CD8-positive, alpha-beta T cell (primary cell): ENCODE measurements at regions of chr6 and their contacts with region 1.

Region 1: GRCh38 chr6:31680840-31681671 is at the start of gene LY6G5C:
- DNase-seq: peak; percentile 29 to 80 (median 60)
- ATAC-seq: peak; percentile 75
- H3K4me3 ChIP-seq: peak within 1 kb of the TSS; percentile 71 to 73
- H3K4me3 Mint-ChIP-seq: peak within 1 kb of the TSS; percentile 89
- H3K27ac ChIP-seq: peak within 1 kb of the TSS in 1 of 2 experiments; percentile 60
- H3K27ac Mint-ChIP-seq: peak within 1 kb of the TSS; percentile 72
- H3K4me1 ChIP-seq: peaks cover 12% of the 10 kb centered on the region
- H3K4me1 Mint-ChIP-seq: peaks cover 16% of the 10 kb centered on the region
- H3K27me3 ChIP-seq: no peaks in the 10 kb centered on the region
- H3K27me3 Mint-ChIP-seq: no peaks in the 10 kb centered on the region
- CTCF ChIP-seq: no peak
- total RNA-seq, gene LY6G5C: 1.5 to 1.9 TPM

Region 2: GRCh38 chr6:31693535-31693934 is 12.5 kb after region 1 on chr6:
- CTCF ChIA-PET with region 1: interaction called, 11 read pairs
- POLR2A ChIA-PET with region 1: no interaction called
- intact Hi-C with region 1: no loop called
- DNase-seq: no peak
- ATAC-seq: no peak
- H3K4me3 ChIP-seq: no peak overlapping the region
- H3K4me3 Mint-ChIP-seq: no peak overlapping the region
- H3K27ac ChIP-seq: no peak overlapping the region
- H3K27ac Mint-ChIP-seq: no peak overlapping the region
- H3K4me1 ChIP-seq: no peaks in the 10 kb centered on the region
- H3K4me1 Mint-ChIP-seq: peaks cover 10% of the 10 kb centered on the region
- H3K27me3 ChIP-seq: no peaks in the 10 kb centered on the region
- H3K27me3 Mint-ChIP-seq: no peaks in the 10 kb centered on the region
- CTCF ChIP-seq: no peak

Region 3: DNA sequence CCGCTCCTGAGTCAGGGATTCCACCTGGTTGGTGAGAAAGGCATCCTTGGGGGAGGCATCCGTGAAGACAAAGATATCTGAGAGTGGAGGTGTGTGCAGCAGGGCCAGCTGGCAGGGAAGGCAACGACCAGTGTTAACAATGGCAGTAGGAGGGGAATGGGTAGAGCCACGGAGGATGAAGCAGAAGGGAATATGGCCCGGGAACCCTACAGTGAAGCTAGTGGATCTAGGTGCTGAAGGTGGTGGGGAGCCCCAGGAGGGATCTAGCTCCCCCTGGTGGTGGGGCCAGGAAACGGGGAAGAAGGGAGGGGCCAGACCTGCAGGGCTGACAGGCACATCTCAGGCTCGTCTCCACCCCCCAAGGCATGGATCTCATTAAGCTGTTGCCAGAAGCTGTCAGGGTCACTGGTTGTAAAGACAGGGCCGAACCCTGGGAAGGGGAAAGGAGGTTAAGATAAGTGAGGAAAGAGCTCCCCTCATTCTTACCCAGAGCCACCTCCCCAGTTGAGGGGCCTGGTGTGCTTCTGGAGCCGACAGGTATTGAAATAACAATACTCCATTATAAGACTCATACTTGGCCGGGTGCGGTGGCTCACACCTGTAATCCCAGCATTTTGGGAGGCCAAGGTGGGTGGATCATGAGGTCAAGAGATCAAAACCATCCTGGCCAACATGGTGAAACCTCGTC is 88.8 kb after region 1 on chr6:
- CTCF ChIA-PET with region 1: interaction called, 5 read pairs
- POLR2A ChIA-PET with region 1: no interaction called
- intact Hi-C with region 1: loop called in 1 of 2 experiments (anchors 1 kb)
- DNase-seq: peak; percentile 63 to 86 (median 80)
- ATAC-seq: peak; percentile 87
- H3K4me3 ChIP-seq: no peak overlapping the region
- H3K4me3 Mint-ChIP-seq: no peak overlapping the region
- H3K27ac ChIP-seq: no peak overlapping the region
- H3K27ac Mint-ChIP-seq: no peak overlapping the region
- H3K4me1 ChIP-seq: peaks cover 25% of the 10 kb centered on the region
- H3K4me1 Mint-ChIP-seq: peaks cover 27% of the 10 kb centered on the region
- H3K27me3 ChIP-seq: no peaks in the 10 kb centered on the region
- H3K27me3 Mint-ChIP-seq: no peaks in the 10 kb centered on the region
- CTCF ChIP-seq: peak; percentile 60

Region 4: DNA sequence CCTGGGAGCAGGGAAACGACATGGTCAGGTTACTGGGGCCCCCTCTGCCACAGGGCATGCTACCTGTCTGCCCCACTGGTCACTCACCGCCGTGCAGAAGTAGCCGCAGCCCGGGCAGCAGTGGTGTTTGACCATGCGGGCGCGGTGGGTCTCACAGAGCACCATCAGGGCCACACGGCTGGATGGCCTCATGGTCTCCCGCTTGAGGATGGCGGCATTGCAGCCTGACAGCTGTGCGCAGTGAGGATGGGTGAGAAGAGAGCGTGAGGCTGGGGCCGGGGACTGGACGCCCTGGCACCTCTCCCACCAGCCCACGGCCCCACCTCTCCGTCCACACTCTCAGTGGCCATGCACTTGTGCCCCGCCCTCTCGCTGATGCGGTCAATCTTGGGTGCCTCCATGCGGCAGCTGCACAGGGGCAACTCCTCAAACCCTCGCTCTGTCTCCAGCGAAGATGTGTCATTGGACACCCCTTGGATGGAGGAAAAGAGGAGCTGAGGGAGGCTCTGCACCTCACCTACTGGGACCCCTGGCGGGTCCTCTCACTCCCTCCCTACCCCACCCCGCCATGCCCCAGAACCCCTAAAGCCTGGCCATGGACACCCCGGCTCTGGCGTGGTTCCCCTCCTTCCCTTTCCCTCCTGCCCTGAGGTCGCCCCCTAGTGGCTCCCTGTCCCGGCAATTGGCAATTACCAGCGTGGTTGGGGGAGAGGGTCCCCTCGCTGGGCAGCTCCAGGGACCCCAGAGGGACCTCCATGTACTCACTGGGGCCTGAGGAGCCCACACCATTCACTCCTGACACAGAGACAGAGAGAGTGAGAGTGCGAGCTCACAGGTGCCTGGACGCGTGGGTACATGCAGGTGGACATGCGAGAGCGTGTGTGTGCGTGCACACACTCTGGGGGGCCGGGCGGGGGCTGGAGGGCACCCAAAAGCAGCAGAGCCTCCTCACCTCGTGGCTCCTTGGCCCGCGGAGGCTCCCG is 207.5 kb after region 1 on chr6:
- CTCF ChIA-PET with region 1: interaction called, 3 read pairs
- POLR2A ChIA-PET with region 1: no interaction called
- intact Hi-C with region 1: loop called in 1 of 2 experiments (anchors 1 kb)
- DNase-seq: peak in 8 of 9 experiments; percentile 40 to 70 (median 62)
- ATAC-seq: peak; percentile 44
- H3K4me3 ChIP-seq: no peak overlapping the region
- H3K4me3 Mint-ChIP-seq: no peak overlapping the region
- H3K27ac ChIP-seq: no peak overlapping the region
- H3K27ac Mint-ChIP-seq: no peak overlapping the region
- H3K4me1 ChIP-seq: no peaks in the 10 kb centered on the region
- H3K4me1 Mint-ChIP-seq: peaks cover 3% of the 10 kb centered on the region
- H3K27me3 ChIP-seq: no peaks in the 10 kb centered on the region
- H3K27me3 Mint-ChIP-seq: no peaks in the 10 kb centered on the region
- CTCF ChIP-seq: peak; percentile 77